Activated naive CD4-positive, alpha-beta T cell treated with anti-CD3 and anti-CD28 coated beads for 36 hours (primary cell): ENCODE measurements at regions of chr19 and their contacts with region 1.

Region 1: DNA sequence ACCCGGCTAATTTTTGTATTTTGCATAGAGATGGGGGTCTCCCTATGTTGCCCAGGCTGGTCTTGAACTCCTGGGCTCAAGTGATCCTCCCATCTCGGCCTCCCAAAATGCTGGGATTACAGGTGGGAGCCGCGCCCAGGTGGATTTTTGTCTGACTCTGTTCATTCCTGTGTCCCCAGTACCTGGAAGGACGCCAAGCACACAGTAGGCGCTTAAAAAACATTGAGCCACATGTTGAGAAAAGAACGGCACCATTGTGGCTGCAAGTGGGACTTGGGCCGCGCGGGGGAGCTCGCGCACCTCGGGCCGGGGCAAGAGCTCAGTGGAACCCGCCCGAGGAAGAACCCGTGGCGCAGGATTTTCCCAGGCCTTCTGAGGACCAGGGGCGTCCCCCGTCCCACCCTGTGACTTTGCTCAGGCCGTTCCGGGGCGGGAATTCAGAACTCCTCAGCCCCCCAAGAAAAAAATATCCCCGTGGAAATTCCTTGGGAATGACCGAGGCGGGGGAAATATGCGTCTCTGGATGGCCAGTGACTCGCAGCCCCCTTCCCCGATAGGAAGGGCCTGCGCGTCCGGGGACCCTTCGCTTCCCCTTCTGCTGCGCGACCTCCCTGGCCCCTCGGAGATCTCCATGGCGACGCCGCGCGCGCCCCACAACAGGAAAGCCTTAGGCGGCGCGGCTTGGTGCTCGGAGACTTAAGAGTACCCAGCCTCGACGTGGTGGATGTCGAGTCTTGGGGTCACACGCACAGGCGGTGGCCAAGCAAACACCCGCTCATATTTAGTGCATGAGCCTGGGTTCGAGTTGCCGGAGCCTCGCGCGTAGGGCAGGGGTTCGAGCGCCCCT is 1.4 kb upstream of the ICAM1 start:
- DNase-seq: peak; percentile 93
- H3K4me3 Mint-ChIP-seq: peak overlapping the region; percentile 78
- H3K27ac Mint-ChIP-seq: peak overlapping the region; percentile 85
- H3K4me1 Mint-ChIP-seq: peaks cover 31% of the 10 kb centered on the region
- H3K27me3 Mint-ChIP-seq: no peaks in the 10 kb centered on the region

Region 2: DNA sequence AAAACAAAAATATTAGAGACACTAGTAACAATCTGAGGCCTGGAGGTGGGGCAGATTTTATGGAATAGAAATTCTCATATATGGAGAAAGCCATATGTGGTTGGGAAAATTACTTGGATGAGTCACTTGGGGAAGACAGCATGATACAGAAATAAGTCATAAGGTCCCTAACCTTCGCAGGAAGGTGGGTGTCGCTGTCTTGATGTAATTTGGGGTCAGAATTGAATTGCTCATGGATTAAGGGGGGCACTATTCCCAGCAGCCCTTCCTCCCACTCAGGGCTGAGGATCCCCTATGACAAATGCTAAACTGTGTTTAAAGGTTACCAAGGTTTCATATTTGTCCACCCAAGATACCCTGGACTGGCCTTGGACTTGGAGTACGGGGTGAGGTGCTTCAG is 251.3 kb before region 1 on chr19:
- CTCF ChIA-PET with region 1: no interaction called
- intact Hi-C with region 1: no loop called
- DNase-seq: no peak
- H3K4me3 Mint-ChIP-seq: no peak overlapping the region
- H3K27ac Mint-ChIP-seq: no peak overlapping the region
- H3K4me1 Mint-ChIP-seq: no peaks in the 10 kb centered on the region
- H3K27me3 Mint-ChIP-seq: peaks cover 11% of the 10 kb centered on the region

Region 3: GRCh38 chr19:10243606-10244005 is 25.9 kb before region 1 on chr19:
- CTCF ChIA-PET with region 1: no interaction called
- intact Hi-C with region 1: no loop called
- DNase-seq: no peak
- H3K4me3 Mint-ChIP-seq: no peak overlapping the region
- H3K27ac Mint-ChIP-seq: no peak overlapping the region
- H3K4me1 Mint-ChIP-seq: no peaks in the 10 kb centered on the region
- H3K27me3 Mint-ChIP-seq: no peaks in the 10 kb centered on the region

Region 4: DNA sequence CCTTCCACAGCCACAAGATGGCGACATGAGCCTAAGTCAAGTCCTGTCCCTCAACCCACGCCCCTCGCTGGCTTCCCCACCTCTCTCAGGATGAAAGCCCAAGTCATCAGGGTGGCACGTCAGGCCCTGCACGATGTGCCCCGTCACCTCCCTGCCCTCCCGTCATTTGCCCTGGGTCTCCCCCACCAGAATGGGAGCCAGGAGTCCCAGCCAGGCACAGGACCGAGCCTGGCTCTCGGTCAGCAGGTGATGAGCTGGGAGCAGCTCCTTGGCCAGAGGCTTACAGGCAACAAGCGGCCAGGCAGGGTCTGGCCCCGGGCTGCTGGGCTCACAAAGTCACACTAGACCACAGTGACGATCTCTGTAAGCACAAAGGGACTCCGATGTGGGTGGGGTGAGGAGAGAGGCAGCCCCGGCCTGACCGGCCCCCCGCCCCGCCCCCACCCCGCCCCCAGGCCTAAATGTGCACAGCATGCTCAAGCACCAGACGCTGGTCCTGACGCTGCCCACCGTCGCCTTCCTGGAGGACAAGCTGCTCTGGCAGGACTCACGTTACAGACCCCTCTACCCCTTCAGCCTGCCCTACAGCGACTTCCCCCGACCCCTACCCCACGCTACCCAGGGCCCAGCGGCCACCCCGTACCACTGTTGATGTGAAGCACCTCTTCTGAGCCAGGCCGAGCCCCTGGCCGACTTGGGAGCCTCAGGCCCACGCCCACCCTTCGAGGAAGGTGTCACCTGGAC is 10.2 kb before region 1 on chr19:
- CTCF ChIA-PET with region 1: interaction called, 56 read pairs
- intact Hi-C with region 1: loop called (anchors 1 kb)
- DNase-seq: peak; percentile 99
- H3K4me3 Mint-ChIP-seq: no peak overlapping the region
- H3K27ac Mint-ChIP-seq: peak overlapping the region; percentile 81
- H3K4me1 Mint-ChIP-seq: peaks cover 25% of the 10 kb centered on the region
- H3K27me3 Mint-ChIP-seq: no peaks in the 10 kb centered on the region

Region 5: DNA sequence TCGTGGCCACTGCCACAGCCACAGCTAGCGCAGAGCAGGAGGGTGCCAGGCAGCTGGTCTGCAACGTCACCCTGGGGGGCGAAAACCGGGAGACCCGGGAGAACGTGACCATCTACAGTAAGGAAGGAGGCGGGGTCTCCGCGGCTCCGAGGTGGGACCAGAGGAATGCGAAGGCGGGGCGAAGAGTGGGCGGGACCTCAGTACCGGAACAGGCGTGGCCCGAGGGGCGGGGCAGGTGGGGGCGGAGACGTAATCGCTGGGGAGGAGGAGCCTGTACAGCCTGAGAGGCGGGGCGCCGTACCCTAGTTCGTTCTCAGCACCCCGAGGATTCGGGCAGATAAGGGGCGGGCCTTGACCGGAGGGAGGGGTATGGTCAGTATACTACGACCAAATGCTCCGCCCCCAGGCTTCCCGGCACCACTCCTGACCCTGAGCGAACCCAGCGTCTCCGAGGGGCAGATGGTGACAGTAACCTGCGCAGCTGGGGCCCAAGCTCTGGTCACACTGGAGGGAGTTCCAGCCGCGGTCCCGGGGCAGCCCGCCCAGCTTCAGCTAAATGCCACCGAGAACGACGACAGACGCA is 22.7 kb after region 1 on chr19:
- CTCF ChIA-PET with region 1: interaction called, 12 read pairs
- intact Hi-C with region 1: loop called (anchors 1 kb)
- DNase-seq: peak; percentile 80
- H3K4me3 Mint-ChIP-seq: peak overlapping the region; percentile 52
- H3K27ac Mint-ChIP-seq: no peak overlapping the region
- H3K4me1 Mint-ChIP-seq: peaks cover 66% of the 10 kb centered on the region
- H3K27me3 Mint-ChIP-seq: peaks cover 77% of the 10 kb centered on the region

Region 6: GRCh38 chr19:10332955-10333757 is 63.6 kb after region 1 on chr19 and contains the start of gene RAVER1:
- CTCF ChIA-PET with region 1: no interaction called
- intact Hi-C with region 1: loop called (anchors 1 kb)
- DNase-seq: peak; percentile 99
- H3K4me3 Mint-ChIP-seq: peak within 1 kb of the TSS; percentile 94
- H3K27ac Mint-ChIP-seq: peak within 1 kb of the TSS; percentile 96
- H3K4me1 Mint-ChIP-seq: peaks cover 36% of the 10 kb centered on the region
- H3K27me3 Mint-ChIP-seq: no peaks in the 10 kb centered on the region
- total RNA-seq, gene RAVER1: 63.0 to 69.0 TPM

Region 7: GRCh38 chr19:10353793-10354391 is 84.3 kb after region 1 on chr19:
- CTCF ChIA-PET with region 1: no interaction called
- intact Hi-C with region 1: no loop called
- DNase-seq: peak; percentile 39
- H3K4me3 Mint-ChIP-seq: no peak overlapping the region
- H3K27ac Mint-ChIP-seq: no peak overlapping the region
- H3K4me1 Mint-ChIP-seq: no peaks in the 10 kb centered on the region
- H3K27me3 Mint-ChIP-seq: no peaks in the 10 kb centered on the region

Region 8: GRCh38 chr19:10388957-10389356 is 119.4 kb after region 1 on chr19:
- CTCF ChIA-PET with region 1: interaction called, 85 read pairs
- intact Hi-C with region 1: loop called (anchors 1 kb)
- DNase-seq: peak; percentile 91
- H3K4me3 Mint-ChIP-seq: no peak overlapping the region
- H3K27ac Mint-ChIP-seq: no peak overlapping the region
- H3K4me1 Mint-ChIP-seq: no peaks in the 10 kb centered on the region
- H3K27me3 Mint-ChIP-seq: no peaks in the 10 kb centered on the region

Region 9: GRCh38 chr19:10431943-10432735 is 162.6 kb after region 1 on chr19:
- CTCF ChIA-PET with region 1: interaction called, 11 read pairs
- intact Hi-C with region 1: no loop called
- DNase-seq: peak; percentile 68
- H3K4me3 Mint-ChIP-seq: peak overlapping the region; percentile 72
- H3K27ac Mint-ChIP-seq: no peak overlapping the region
- H3K4me1 Mint-ChIP-seq: peaks cover 38% of the 10 kb centered on the region
- H3K27me3 Mint-ChIP-seq: peaks cover 42% of the 10 kb centered on the region